Mucosa of descending colon (tissue), 3 donors: ENCODE measurements at regions of chr3 and their contacts with region 1.

Region 1: DNA sequence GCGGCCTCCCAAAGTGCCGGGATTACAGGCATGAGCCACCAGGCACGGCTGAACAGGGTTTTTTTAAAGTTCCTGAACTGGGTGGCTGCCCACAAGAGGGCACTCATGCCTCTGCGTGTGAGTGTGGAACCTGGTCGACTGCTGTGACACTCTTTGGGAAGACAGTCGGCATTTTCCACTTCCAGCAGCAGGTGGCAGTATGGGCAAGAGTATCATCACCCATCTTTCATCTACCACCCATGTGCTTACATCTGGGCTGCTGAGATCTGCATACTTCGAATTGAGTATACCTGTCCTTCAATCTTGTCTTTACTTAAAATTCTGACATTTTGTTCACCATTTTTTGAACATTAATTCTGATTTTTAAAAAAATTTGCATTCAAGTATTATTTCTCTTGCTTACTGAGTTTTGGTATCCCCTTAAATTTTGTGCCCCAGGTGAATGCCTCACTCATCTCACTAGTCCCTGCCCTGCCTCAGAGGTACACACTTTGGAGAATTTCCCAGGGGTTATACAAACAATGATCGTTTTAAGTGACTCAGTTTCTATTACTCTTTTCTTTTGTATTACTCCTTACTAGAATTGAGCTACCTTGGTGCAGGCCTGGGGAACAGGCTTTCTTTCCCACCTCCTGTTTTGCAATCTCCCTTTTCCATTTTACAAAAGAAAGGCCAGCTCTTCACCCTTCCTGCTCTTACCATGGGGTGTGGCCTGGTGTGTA is 11.8 kb downstream of the CLEC3B start:
- DNase-seq: peak; percentile 88 to 99 (median 93)
- ATAC-seq: peak; percentile 94
- H3K4me3 ChIP-seq: no peak overlapping the region
- H3K4me1 ChIP-seq: peaks cover 32% of the 10 kb centered on the region
- CTCF ChIP-seq: peak; percentile 84

Region 2: DNA sequence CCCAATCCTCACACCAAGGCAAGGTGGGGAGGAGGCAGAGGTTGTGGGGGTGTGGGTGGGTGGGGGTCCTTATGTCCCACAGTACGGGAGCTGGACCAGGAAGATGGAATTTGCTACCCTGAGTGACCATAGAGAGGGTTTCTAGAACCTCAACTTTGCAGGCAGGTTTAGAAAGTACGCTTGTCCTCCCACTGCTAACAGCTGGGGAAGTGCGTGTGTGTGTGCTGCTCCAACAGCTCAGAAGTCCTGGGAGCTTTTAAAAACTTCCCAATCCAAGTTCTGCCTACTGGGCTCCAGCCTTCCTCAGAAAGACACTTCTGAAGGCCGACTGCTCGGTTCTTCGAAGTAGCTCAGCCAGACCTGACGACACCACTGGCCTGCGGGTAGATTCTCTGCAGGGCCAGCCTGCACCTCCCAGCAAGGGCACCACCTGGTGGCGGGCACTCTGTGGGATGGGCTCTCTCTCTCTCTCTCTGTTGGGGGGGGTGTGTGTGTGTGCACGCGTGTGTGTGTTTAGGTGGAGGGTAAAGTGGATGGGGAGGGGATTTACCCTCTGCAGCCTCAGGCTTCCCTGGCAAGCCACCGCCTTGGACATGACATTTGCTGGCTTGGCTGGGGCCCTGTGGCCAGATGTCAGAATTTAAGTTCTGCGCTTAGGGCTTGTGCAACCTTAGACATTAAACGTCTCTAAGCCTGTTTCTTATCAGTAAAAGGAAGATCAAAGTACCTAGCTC is 172.6 kb after region 1 on chr3:
- intact Hi-C with region 1: loop called (anchors 2 to 5 kb)
- DNase-seq: peak; percentile 86 to 92 (median 91)
- ATAC-seq: peak; percentile 95
- H3K4me3 ChIP-seq: no peak overlapping the region
- H3K4me1 ChIP-seq: peaks cover 12% of the 10 kb centered on the region
- CTCF ChIP-seq: peak; percentile 61

Region 3: GRCh38 chr3:45236964-45237363 is 199.1 kb after region 1 on chr3:
- intact Hi-C with region 1: no loop called
- DNase-seq: no peak
- ATAC-seq: no peak
- H3K4me3 ChIP-seq: no peak overlapping the region
- H3K4me1 ChIP-seq: no peaks in the 10 kb centered on the region
- CTCF ChIP-seq: no peak